PC-3 (cell line): ENCODE measurements at regions of chr17 and their contacts with region 1.

Region 1: DNA sequence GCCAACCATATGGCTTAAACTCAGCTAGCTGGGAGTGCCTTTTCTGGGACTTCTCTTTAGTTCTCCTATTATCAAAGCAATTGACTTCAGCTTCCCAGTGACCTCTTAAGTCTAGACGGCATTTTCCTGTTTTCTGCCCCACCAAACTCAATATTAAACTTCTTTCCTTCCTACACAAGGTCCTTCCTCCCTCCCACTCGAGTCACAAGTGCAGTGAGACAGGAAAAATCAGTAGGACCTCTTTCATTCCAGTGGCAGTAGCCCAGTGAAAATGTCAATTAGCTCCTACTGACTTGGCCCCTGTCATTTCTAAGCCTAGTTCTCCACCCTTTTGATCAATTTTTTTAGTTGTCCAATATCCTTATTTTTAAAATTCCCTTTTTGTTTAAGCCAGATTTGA is 9.6 kb upstream of the NACA2 start:
- DNase-seq: no peak
- ATAC-seq: no peak
- H3K4me3 ChIP-seq: no peak overlapping the region
- H3K27ac ChIP-seq: no peak overlapping the region
- H3K4me1 ChIP-seq: no peaks in the 10 kb centered on the region
- H3K27me3 ChIP-seq: peaks cover 14% of the 10 kb centered on the region; the same call in 1 of the 2 replicates
- CTCF ChIP-seq: no peak

Region 2: DNA sequence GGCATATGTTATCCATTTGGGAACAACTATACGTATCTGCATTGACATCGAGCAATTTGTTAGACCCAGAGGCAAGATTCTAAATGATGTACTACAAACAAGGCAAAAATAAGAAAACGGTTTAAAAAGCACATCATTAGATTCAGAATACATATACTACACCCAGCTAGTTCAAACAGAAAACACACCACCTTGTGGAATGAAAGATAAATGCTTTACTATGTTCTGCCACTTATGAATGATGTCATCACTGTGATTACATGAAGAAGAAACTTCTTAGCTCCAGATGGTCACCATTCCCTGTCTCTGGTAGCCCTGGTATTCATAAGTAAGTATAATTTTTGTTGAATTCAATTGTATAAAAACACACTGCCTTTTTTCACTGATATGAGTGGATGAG is 17.4 kb before region 1 on chr17:
- CTCF ChIA-PET with region 1: no interaction called
- POLR2A ChIA-PET with region 1: no interaction called
- intact Hi-C with region 1: no loop called
- DNase-seq: peak; percentile 86
- ATAC-seq: peak; percentile 66
- H3K4me3 ChIP-seq: no peak overlapping the region
- H3K27ac ChIP-seq: no peak overlapping the region
- H3K4me1 ChIP-seq: peaks cover 30% of the 10 kb centered on the region
- H3K27me3 ChIP-seq: no peaks in the 10 kb centered on the region
- CTCF ChIP-seq: peak; percentile 83

Region 3: GRCh38 chr17:62399294-62399872 is 798.8 kb after region 1 on chr17:
- CTCF ChIA-PET with region 1: no interaction called
- POLR2A ChIA-PET with region 1: interaction called, 10 read pairs
- intact Hi-C with region 1: no loop called
- DNase-seq: no peak
- ATAC-seq: no peak
- H3K4me3 ChIP-seq: no peak overlapping the region
- H3K27ac ChIP-seq: no peak overlapping the region
- H3K4me1 ChIP-seq: no peaks in the 10 kb centered on the region
- H3K27me3 ChIP-seq: peaks cover 22% of the 10 kb centered on the region
- CTCF ChIP-seq: no peak